ENCODE measurements at regions of chr4 and their contacts with region 1.

Region 1: DNA sequence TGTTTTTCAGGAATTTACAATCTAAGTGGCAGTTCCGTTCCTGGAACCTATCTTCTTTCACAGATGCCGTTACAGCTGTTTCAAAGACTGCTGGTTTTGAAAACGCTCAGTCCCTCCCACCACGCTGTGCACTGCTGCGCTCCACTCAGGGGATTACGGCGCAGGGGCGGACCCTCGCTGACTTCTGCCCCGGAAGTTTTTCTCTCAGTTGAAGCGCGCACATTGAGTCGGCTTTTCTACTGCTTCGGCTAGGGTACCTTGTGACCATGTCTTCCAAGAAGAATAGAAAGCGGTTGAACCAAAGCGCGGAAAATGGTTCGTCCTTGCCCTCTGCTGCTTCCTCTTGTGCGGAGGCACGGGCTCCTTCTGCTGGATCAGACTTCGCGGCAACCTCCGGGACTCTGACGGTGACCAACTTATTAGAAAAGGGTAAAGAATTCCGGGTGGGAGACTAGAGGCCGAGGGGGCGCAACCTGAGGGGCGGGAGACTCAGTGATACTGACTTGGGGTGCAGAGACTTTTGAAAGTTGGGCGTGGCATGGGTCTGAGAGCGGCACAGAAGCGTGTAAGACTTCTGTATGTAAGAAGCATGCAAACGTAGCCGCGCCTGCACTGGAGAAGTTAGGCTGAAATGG is 597 bp upstream of the NUDT6 start:
- DNase-seq: peak; percentile 83 to 90 (median 85)
- H3K4me3 ChIP-seq: peak overlapping the region; percentile 92 to 94
- H3K4me3 Mint-ChIP-seq: peak overlapping the region in 5 of 8 donors; percentile 93 to 100 (median 99)
- H3K27ac ChIP-seq: peak overlapping the region; percentile 66
- H3K27ac Mint-ChIP-seq: peak overlapping the region; percentile 90 to 99 (median 98)
- H3K4me1 ChIP-seq: peaks cover 28% of the 10 kb centered on the region
- H3K4me1 Mint-ChIP-seq: peaks cover 0 to 14% (median 6%) of the 10 kb centered on the region in 4 donors
- H3K27me3 ChIP-seq: no peaks in the 10 kb centered on the region
- H3K27me3 Mint-ChIP-seq: no peaks in the 10 kb centered on the region

Region 2: GRCh38 chr4:121823505-121824170 is 1099.4 kb before region 1 on chr4 and contains the start of gene CCNA2:
- CTCF ChIA-PET with region 1: no interaction called
- POLR2A ChIA-PET with region 1: no interaction called
- intact Hi-C with region 1: loop called (anchors 5 kb)
- DNase-seq: peak; percentile 93 to 97 (median 94)
- H3K4me3 ChIP-seq: peak within 1 kb of the TSS; percentile 62 to 73
- H3K4me3 Mint-ChIP-seq: peak within 1 kb of the TSS; percentile 87 to 98 (median 91)
- H3K27ac ChIP-seq: peak within 1 kb of the TSS; percentile 55
- H3K27ac Mint-ChIP-seq: peak within 1 kb of the TSS; percentile 77 to 99 (median 92)
- H3K4me1 ChIP-seq: peaks cover 19% of the 10 kb centered on the region
- H3K4me1 Mint-ChIP-seq: peaks cover 6 to 21% (median 15%) of the 10 kb centered on the region in 4 donors
- H3K27me3 ChIP-seq: no peaks in the 10 kb centered on the region
- H3K27me3 Mint-ChIP-seq: no peaks in the 10 kb centered on the region
- total RNA-seq, gene CCNA2: 1.2 to 1.4 TPM

Region 3: GRCh38 chr4:122458625-122459024 is 464.4 kb before region 1 on chr4:
- CTCF ChIA-PET with region 1: no interaction called
- POLR2A ChIA-PET with region 1: no interaction called
- intact Hi-C with region 1: loop called (anchors 5 kb)
- DNase-seq: peak; percentile 45 to 70 (median 53)
- H3K4me3 ChIP-seq: peak overlapping the region; percentile 26 to 75
- H3K4me3 Mint-ChIP-seq: peak overlapping the region; percentile 84 to 90 (median 88)
- H3K27ac ChIP-seq: peak overlapping the region; percentile 42
- H3K27ac Mint-ChIP-seq: peak overlapping the region; percentile 81 to 95 (median 93)
- H3K4me1 ChIP-seq: peaks cover 55% of the 10 kb centered on the region
- H3K4me1 Mint-ChIP-seq: peaks cover 40 to 52% (median 46%) of the 10 kb centered on the region in 4 donors
- H3K27me3 ChIP-seq: no peaks in the 10 kb centered on the region
- H3K27me3 Mint-ChIP-seq: no peaks in the 10 kb centered on the region

Region 4: DNA sequence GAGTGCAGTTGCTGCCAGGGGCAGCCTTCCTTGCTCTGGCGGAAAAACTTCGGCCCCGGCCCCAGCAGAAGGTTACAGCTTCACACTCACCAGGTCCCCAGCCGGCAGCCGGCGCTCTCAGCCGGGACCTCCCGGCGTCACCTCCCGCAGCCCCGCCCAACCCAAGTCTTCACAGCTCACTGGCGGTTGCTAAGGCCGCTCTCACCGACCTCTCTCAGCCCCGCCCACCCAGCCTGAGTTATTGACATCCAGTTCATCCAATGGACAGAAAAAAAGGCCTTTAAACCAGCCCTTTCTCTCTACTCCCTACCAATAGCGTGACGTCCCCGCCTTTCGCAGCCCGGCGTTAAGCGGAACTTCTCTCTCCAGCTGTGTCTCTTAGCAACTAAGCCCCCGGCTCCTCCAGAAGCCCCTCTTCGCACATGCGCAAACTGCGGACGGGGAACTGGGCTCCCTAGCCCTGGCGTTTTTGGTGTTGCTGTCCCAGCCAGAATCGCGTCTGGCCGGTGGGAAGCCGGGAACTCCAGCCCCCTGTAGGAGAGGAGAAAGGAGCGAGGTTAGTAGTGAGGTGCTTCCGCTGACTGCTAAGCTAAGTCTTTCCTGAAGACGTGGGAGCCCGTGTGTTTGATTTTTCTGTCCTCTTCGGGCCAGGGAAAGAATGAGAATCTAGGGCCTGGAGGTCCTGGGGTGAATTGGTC is 190.5 kb before region 1 on chr4 and contains the start of gene BBS12:
- CTCF ChIA-PET with region 1: interaction called, 10 read pairs
- POLR2A ChIA-PET with region 1: interaction called, 31 read pairs
- intact Hi-C with region 1: loop called (anchors 1 kb)
- DNase-seq: peak; percentile 99
- H3K4me3 ChIP-seq: peak within 1 kb of the TSS; percentile 96 to 98
- H3K4me3 Mint-ChIP-seq: peak within 1 kb of the TSS; percentile 97 to 99 (median 98)
- H3K27ac ChIP-seq: peak within 1 kb of the TSS; percentile 75
- H3K27ac Mint-ChIP-seq: peak within 1 kb of the TSS; percentile 95 to 100 (median 99)
- H3K4me1 ChIP-seq: peaks cover 19% of the 10 kb centered on the region
- H3K4me1 Mint-ChIP-seq: peaks cover 11 to 22% (median 17%) of the 10 kb centered on the region in 4 donors
- H3K27me3 ChIP-seq: no peaks in the 10 kb centered on the region
- H3K27me3 Mint-ChIP-seq: no peaks in the 10 kb centered on the region
- total RNA-seq, gene BBS12: 3.7 to 4.1 TPM

Region 5: GRCh38 chr4:122827879-122828601 is 95.0 kb before region 1 on chr4:
- CTCF ChIA-PET with region 1: no interaction called
- POLR2A ChIA-PET with region 1: no interaction called
- intact Hi-C with region 1: loop called (anchors 2 kb)
- DNase-seq: peak; percentile 38 to 54 (median 42)
- H3K4me3 ChIP-seq: peak overlapping the region; percentile 2 to 66
- H3K4me3 Mint-ChIP-seq: peak overlapping the region; percentile 75 to 89 (median 82)
- H3K27ac ChIP-seq: no peak overlapping the region
- H3K27ac Mint-ChIP-seq: peak overlapping the region in 1 of 7 donors; percentile 47
- H3K4me1 ChIP-seq: peaks cover 15% of the 10 kb centered on the region
- H3K4me1 Mint-ChIP-seq: peaks cover 10 to 21% (median 15%) of the 10 kb centered on the region in 4 donors
- H3K27me3 ChIP-seq: peaks cover 26% of the 10 kb centered on the region
- H3K27me3 Mint-ChIP-seq: peaks cover 43 to 66% of the 10 kb centered on the region in 2 donors

Region 6: GRCh38 chr4:123396307-123397143 is 473.5 kb after region 1 on chr4 and contains the start of gene SPRY1:
- CTCF ChIA-PET with region 1: no interaction called
- POLR2A ChIA-PET with region 1: no interaction called
- intact Hi-C with region 1: loop called (anchors 2 kb)
- DNase-seq: peak; percentile 63 to 83 (median 74)
- H3K4me3 ChIP-seq: peak within 1 kb of the TSS; percentile 31 to 80
- H3K4me3 Mint-ChIP-seq: peak within 1 kb of the TSS; percentile 82 to 96 (median 89)
- H3K27ac ChIP-seq: peak within 1 kb of the TSS; percentile 22
- H3K27ac Mint-ChIP-seq: peak within 1 kb of the TSS; percentile 21 to 91 (median 81)
- H3K4me1 ChIP-seq: peaks cover 27% of the 10 kb centered on the region
- H3K4me1 Mint-ChIP-seq: peaks cover 16 to 34% (median 24%) of the 10 kb centered on the region in 4 donors
- H3K27me3 ChIP-seq: no peaks in the 10 kb centered on the region
- H3K27me3 Mint-ChIP-seq: peaks cover 14 to 15% of the 10 kb centered on the region in 2 donors
- total RNA-seq, gene SPRY1: 4.4 to 4.6 TPM